Activated naive CD4-positive, alpha-beta T cell treated with anti-CD3 and anti-CD28 coated beads for 36 hours (primary cell): ENCODE measurements at regions of chr10 and their contacts with region 1.

Region 1: GRCh38 chr10:6580279-6581029 is 378 bp upstream of the PRKCQ start:
- DNase-seq: peak; percentile 86
- H3K4me3 Mint-ChIP-seq: peak overlapping the region; percentile 92
- H3K27ac Mint-ChIP-seq: peak overlapping the region; percentile 99
- H3K4me1 Mint-ChIP-seq: peaks cover 39% of the 10 kb centered on the region
- H3K27me3 Mint-ChIP-seq: no peaks in the 10 kb centered on the region

Region 2: GRCh38 chr10:6275022-6275997 is 305.1 kb before region 1 on chr10:
- CTCF ChIA-PET with region 1: no interaction called
- intact Hi-C with region 1: loop called (anchors 10 kb)
- DNase-seq: peak; percentile 98
- H3K4me3 Mint-ChIP-seq: peak overlapping the region; percentile 60
- H3K27ac Mint-ChIP-seq: peak overlapping the region; percentile 94
- H3K4me1 Mint-ChIP-seq: peaks cover 50% of the 10 kb centered on the region
- H3K27me3 Mint-ChIP-seq: no peaks in the 10 kb centered on the region

Region 3: DNA sequence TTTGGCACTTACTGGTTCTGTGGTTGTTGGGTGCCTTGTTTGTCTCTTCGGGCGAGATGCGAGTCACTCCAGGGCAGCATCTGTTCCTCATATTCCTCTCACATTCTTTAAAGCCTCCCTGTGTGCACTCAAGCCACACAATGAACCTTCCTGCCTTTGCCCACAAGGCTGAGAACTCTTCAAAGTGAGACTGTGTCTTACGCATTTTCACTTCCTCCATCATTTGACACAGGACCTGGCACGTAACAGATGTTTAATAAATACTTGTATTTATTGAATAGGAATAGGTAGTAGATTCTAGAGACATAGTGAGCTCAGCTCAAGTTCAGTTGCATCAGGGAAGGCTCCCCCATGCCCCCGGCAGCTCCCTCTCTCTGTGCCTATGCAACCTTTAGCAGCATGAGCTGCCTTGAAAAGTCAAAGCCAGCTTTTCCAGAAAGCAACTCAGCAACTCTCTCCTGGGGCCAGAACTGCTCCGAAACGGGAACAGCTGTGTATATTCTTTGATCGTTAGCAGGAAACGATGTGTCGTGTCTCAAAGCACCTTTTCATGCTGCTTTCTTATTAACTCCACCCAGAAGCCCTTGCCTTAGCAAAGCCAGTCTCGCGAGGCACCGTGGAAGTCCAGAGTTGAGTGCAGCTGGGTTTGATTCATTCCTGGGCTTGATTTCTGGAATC is 280.2 kb before region 1 on chr10:
- CTCF ChIA-PET with region 1: no interaction called
- intact Hi-C with region 1: no loop called
- DNase-seq: peak; percentile 79
- H3K4me3 Mint-ChIP-seq: peak overlapping the region; percentile 35
- H3K27ac Mint-ChIP-seq: peak overlapping the region; percentile 91
- H3K4me1 Mint-ChIP-seq: peaks cover 51% of the 10 kb centered on the region
- H3K27me3 Mint-ChIP-seq: no peaks in the 10 kb centered on the region

Region 4: DNA sequence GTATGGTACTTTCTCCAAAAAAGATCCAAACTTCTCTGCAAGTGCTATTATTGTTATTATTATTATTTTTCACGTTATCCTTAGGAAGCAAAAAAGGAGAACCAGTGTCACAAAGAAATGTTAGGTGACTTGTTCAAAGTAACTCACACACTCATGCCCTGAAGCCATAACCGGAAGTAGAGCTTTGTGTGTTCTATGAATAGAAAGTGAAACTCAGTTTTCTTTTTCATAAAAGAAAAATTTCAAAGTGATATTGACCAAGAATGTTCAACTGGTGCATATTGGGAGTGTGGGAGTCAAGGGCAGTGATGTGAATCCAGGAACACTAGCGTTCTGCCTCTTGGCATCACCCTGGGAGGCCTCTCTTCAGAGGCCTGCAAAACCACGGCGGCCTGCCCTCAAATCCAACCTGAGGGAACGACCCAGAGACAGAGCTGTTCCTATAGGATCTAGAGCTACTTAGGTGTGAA is 106.5 kb before region 1 on chr10:
- CTCF ChIA-PET with region 1: interaction called, 5 read pairs
- intact Hi-C with region 1: loop called (anchors 1 kb)
- DNase-seq: peak; percentile 36
- H3K4me3 Mint-ChIP-seq: peak overlapping the region; percentile 71
- H3K27ac Mint-ChIP-seq: peak overlapping the region; percentile 89
- H3K4me1 Mint-ChIP-seq: peaks cover 53% of the 10 kb centered on the region
- H3K27me3 Mint-ChIP-seq: no peaks in the 10 kb centered on the region

Region 5: GRCh38 chr10:6486297-6486696 is 94.2 kb before region 1 on chr10:
- CTCF ChIA-PET with region 1: no interaction called
- intact Hi-C with region 1: no loop called
- DNase-seq: no peak
- H3K4me3 Mint-ChIP-seq: no peak overlapping the region
- H3K27ac Mint-ChIP-seq: peak overlapping the region; percentile 18
- H3K4me1 Mint-ChIP-seq: peaks cover 46% of the 10 kb centered on the region
- H3K27me3 Mint-ChIP-seq: no peaks in the 10 kb centered on the region

Region 6: GRCh38 chr10:6563075-6563474 is 17.4 kb before region 1 on chr10:
- CTCF ChIA-PET with region 1: interaction called, 8 read pairs
- intact Hi-C with region 1: loop called (anchors 1 kb)
- DNase-seq: peak; percentile 84
- H3K4me3 Mint-ChIP-seq: peak overlapping the region; percentile 61
- H3K27ac Mint-ChIP-seq: peak overlapping the region; percentile 82
- H3K4me1 Mint-ChIP-seq: peaks cover 85% of the 10 kb centered on the region
- H3K27me3 Mint-ChIP-seq: no peaks in the 10 kb centered on the region

Region 7: DNA sequence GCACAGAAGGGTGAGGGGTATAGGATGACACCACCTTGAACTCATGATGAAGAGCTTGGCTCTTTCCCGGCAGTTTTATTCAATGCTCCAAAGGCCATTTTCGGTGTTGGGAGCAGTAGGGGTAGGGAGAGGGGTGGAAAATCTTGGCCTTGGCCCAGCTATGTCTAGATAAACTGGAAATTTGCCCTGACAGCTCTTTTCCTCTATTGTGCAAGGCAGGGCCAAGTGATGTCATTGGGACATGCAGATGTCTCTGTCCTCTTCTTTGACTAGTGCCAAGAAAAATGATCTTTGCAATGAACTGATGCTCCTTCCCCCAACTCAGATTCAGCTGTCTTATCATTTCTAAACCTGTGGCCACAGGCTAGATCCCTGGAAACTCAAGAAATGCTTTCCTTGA is 27.3 kb after region 1 on chr10:
- CTCF ChIA-PET with region 1: interaction called, 50 read pairs
- intact Hi-C with region 1: loop called (anchors 1 kb)
- DNase-seq: no peak
- H3K4me3 Mint-ChIP-seq: peak overlapping the region; percentile 65
- H3K27ac Mint-ChIP-seq: peak overlapping the region; percentile 94
- H3K4me1 Mint-ChIP-seq: peaks cover 72% of the 10 kb centered on the region
- H3K27me3 Mint-ChIP-seq: no peaks in the 10 kb centered on the region